Endothelial cell of umbilical vein (primary cell): ENCODE measurements at regions of chr3 and their contacts with region 1.

Region 1: DNA sequence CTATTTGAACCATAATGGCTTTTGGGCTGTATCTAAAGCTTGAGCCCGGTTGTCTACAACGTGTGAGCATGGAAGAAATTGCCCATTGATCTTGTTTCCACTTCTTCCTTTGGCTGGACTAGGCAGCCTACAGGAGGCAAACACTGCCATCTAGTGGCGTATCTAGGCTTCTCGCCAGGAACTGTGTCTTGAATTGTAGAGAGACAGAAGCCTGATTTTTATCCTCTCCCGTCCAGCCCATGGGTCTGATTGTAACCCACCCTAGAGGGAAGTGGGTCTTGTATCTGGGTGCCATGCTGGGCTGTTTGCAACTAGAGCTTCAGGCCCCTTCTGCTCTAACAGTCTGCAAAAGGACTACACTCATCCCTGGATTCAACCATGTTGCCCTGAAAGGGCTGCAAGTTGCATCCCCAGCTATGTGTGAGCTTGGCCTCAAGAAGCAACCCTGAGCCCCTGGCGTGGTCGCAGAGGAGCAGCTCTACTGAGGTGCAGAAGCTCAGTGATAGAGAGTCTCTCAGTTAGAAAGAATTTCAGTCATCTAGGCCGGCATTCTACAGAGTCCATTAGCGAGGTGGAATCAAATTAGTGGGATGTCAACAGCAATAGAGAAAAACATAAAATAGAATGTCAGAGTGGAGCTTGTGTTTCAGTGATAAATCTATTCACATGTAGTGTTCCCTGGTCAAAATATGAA is 170.2 kb upstream of the UMPS start:
- DNase-seq: peak; percentile 78
- H3K4me3 ChIP-seq: no peak overlapping the region
- H3K27ac ChIP-seq: no peak overlapping the region
- H3K4me1 ChIP-seq: peaks cover 29% of the 10 kb centered on the region
- H3K27me3 ChIP-seq: peaks cover 0 to 10% of the 10 kb centered on the region in 2 experiments
- CTCF ChIP-seq: peak; percentile 81 to 89
- POLR2A ChIP-seq: no peak

Region 2: GRCh38 chr3:124032648-124033359 is 527.2 kb before region 1 on chr3:
- CTCF ChIA-PET with region 1: no interaction called
- POLR2A ChIA-PET with region 1: no interaction called
- dilution Hi-C with region 1: no loop called
- intact Hi-C with region 1: loop called (anchors 5 kb)
- DNase-seq: peak; percentile 90
- H3K4me3 ChIP-seq: peak overlapping the region; percentile 64 to 96 (median 65)
- H3K27ac ChIP-seq: peak overlapping the region; percentile 55
- H3K4me1 ChIP-seq: peaks cover 6% of the 10 kb centered on the region
- H3K27me3 ChIP-seq: peaks cover 22 to 31% of the 10 kb centered on the region in 2 experiments
- CTCF ChIP-seq: peak; percentile 48 to 70
- POLR2A ChIP-seq: peak; percentile 16

Region 3: DNA sequence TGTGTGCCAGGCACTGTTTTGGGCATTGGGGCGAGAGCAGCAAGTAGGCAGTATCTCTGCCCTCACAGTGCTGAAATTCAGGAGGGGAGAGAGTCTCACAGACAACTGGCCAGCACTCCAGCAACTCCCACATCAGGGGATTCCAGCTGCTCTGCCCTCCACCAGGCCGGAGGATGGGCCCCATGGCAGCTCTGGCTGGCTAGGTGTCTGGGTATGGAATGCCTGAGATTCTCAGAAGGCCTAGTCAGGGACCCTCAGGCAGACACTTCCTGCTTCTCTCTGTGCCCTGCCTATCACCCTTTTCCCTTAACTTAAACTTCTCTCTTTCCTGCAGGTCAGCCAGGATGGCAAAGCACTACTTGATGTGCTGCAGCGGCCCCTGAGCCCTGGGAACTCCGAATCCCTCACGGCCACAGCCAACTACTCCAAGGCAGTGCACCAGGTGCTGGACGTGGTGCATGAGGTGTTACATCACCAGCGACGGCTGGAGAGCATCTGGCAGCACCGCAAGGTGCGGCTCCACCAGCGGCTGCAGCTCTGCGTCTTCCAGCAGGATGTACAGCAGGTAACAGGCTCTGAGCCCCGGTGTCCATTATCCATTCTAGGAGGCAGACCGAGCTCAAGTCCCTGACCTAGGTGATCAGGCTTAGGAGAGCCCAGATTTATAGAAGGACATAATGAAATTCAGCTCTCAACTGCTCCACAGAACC is 225.9 kb before region 1 on chr3:
- CTCF ChIA-PET with region 1: no interaction called
- POLR2A ChIA-PET with region 1: no interaction called
- dilution Hi-C with region 1: no loop called
- intact Hi-C with region 1: no loop called
- DNase-seq: no peak
- H3K4me3 ChIP-seq: no peak overlapping the region
- H3K27ac ChIP-seq: no peak overlapping the region
- H3K4me1 ChIP-seq: no peaks in the 10 kb centered on the region
- H3K27me3 ChIP-seq: no peaks in the 10 kb centered on the region
- CTCF ChIP-seq: no peak
- POLR2A ChIP-seq: no peak

Region 4: GRCh38 chr3:124467980-124468902 is 91.8 kb before region 1 on chr3:
- CTCF ChIA-PET with region 1: interaction called, 11 read pairs
- POLR2A ChIA-PET with region 1: no interaction called
- dilution Hi-C with region 1: no loop called
- intact Hi-C with region 1: loop called (anchors 2 kb)
- DNase-seq: peak; percentile 58
- H3K4me3 ChIP-seq: no peak overlapping the region
- H3K27ac ChIP-seq: no peak overlapping the region
- H3K4me1 ChIP-seq: no peaks in the 10 kb centered on the region
- H3K27me3 ChIP-seq: peaks cover 0 to 2% of the 10 kb centered on the region in 2 experiments
- CTCF ChIP-seq: peak; percentile 91 to 97
- POLR2A ChIP-seq: no peak

Region 5: DNA sequence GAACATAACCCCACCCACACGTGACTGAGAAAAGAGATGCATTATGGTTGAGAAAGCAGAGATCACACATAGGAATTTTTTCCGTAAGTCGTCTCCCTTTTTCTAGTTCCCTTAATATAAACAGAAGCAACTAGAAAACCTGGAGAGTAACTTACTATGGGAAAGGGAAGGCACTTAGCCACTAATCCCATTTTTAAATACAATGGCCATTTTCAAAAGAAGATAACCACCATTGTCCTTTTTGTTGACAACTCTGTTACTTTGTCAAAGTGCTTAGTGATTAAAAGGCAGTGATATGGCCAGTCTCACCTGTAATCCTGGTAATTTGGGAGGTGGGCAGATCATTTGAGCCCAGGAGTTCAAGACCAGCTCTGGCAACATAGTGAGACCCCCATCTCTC is 14.1 kb before region 1 on chr3:
- CTCF ChIA-PET with region 1: interaction called, 44 read pairs
- POLR2A ChIA-PET with region 1: no interaction called
- dilution Hi-C with region 1: no loop called
- intact Hi-C with region 1: loop called (anchors 1 kb)
- DNase-seq: no peak
- H3K4me3 ChIP-seq: no peak overlapping the region
- H3K27ac ChIP-seq: no peak overlapping the region
- H3K4me1 ChIP-seq: peaks cover 8% of the 10 kb centered on the region
- H3K27me3 ChIP-seq: peaks cover 0 to 5% of the 10 kb centered on the region in 2 experiments
- CTCF ChIP-seq: no peak
- POLR2A ChIP-seq: no peak

Region 6: DNA sequence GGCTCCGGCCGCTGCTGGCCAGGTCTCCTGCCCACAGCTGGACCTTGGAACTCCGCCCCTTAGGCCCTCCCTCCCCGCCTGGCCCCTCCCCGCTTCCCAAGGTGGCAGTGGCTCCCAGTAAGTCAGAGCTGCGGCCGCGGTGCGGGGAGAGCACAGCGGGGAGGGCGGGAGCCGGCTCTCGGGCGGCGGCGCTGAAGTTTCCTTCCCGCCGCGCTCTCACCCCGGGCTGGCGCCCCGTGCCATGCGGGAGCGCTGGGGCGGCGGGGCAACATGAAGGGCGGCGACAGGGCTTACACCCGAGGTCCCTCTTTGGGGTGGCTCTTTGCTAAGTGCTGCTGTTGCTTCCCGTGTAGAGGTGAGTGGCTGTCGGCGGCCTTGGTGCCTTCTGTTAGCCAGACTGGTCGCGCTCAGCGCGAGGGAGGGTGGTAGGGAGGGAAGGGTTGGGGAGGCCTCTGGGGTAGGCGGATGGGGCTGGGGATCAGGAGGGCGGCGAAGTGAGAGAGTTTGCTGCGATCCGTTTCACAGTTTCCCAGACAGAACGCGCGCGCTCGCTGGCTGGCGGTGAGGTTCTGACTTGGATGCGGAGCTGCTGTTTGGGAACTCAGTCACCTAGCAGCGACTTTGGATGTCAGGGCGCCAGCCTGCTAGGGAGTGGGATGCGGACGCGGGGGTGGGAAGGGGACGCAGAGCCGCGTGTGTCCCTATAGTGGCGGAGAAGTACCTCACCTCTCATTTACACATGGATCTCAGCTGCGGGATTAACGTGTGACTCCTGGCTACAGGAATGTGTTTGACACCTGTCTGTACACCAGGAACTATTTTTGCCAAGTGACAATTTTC is 24.7 kb after region 1 on chr3:
- CTCF ChIA-PET with region 1: interaction called, 20 read pairs
- POLR2A ChIA-PET with region 1: no interaction called
- dilution Hi-C with region 1: no loop called
- intact Hi-C with region 1: no loop called
- DNase-seq: peak; percentile 55
- H3K4me3 ChIP-seq: peak overlapping the region in 2 of 3 experiments; percentile 7 to 23
- H3K27ac ChIP-seq: no peak overlapping the region
- H3K4me1 ChIP-seq: no peaks in the 10 kb centered on the region
- H3K27me3 ChIP-seq: peaks cover 19 to 21% of the 10 kb centered on the region in 2 experiments
- CTCF ChIP-seq: no peak
- POLR2A ChIP-seq: no peak

Region 7: GRCh38 chr3:124752051-124752450 is 192.0 kb after region 1 on chr3:
- CTCF ChIA-PET with region 1: no interaction called
- POLR2A ChIA-PET with region 1: no interaction called
- dilution Hi-C with region 1: no loop called
- intact Hi-C with region 1: no loop called
- DNase-seq: no peak
- H3K4me3 ChIP-seq: no peak overlapping the region
- H3K27ac ChIP-seq: no peak overlapping the region
- H3K4me1 ChIP-seq: no peaks in the 10 kb centered on the region
- H3K27me3 ChIP-seq: no peaks in the 10 kb centered on the region
- CTCF ChIP-seq: no peak
- POLR2A ChIP-seq: no peak

Region 8: DNA sequence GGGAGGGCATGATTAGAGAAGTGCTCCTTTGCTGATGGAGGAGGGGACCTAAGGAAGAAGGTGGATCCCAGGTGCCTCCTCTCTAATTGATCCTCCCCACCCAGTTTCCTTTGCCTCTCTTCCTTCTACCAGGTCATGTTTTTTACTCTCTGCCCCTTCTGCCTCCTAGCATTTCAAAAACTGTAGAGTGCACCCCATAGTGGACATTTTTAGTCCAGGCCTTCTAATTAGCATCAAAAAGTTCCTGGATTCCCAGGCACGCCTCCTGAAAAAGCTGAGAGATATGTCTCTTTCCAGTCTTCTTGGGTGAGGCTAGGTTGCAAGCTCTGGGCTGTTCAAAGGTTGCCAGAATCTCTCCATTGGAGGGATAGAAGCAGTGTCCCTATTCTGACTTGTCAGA is 345.8 kb after region 1 on chr3:
- CTCF ChIA-PET with region 1: interaction called, 29 read pairs
- POLR2A ChIA-PET with region 1: no interaction called
- dilution Hi-C with region 1: no loop called
- intact Hi-C with region 1: loop called (anchors 1 kb)
- DNase-seq: no peak
- H3K4me3 ChIP-seq: no peak overlapping the region
- H3K27ac ChIP-seq: no peak overlapping the region
- H3K4me1 ChIP-seq: no peaks in the 10 kb centered on the region
- H3K27me3 ChIP-seq: peaks cover 26 to 27% of the 10 kb centered on the region in 2 experiments
- CTCF ChIP-seq: no peak
- POLR2A ChIP-seq: no peak